Dendritic cell treated with granulocyte-macrophage colony-stimulating factor and Interleukin-4, amounts not matched to agents 40 ng/mL and 50 ng/mL, for 4 days (primary cell): ENCODE measurements at regions of chr6 and their contacts with region 1.

Region 1: DNA sequence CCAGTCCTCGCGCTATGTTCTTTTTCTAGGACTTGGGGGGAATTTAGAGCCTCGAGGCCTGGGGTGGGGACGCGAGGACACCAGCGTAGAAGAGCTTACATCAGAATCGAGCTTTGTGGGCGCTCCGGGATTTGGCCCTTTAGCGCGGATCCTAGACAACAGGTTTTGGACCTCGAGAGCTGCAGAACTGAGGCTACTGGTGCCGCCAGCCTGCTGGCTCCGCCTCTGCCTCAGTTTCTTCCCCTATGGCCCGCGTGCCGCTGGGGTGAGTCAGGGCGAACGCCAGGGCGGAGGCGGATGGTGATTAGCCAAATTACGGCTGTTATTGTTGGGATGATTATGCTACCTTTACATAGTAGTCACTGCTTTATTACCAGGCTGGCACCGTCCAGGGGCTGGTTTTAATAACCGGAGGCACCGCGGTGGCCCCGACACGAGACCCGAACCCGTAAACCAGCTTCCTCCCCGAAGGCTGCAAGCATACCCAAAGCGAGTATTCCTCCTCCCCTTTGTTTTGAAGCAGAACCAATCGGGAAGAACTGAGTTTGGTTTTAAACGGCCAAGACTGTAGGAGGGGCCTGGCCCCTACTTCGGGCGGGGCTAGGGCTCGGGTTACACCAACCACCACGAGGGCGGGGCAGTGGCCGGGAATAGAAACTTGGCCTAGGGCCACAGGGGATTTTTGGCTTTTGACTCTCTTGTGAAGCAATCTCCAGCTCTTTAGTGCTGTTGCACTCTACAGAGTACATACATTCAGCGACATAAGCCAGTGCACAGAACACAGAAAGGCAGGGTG is 639 bp upstream of the GTPBP2 start:
- H3K4me3 Mint-ChIP-seq: peak overlapping the region; percentile 99
- H3K27ac Mint-ChIP-seq: peak overlapping the region; percentile 97
- H3K4me1 Mint-ChIP-seq: peaks cover 61% of the 10 kb centered on the region
- H3K27me3 Mint-ChIP-seq: no peaks in the 10 kb centered on the region

Region 2: GRCh38 chr6:43089874-43090558 is 539.7 kb before region 1 on chr6:
- intact Hi-C with region 1: no loop called
- H3K4me3 Mint-ChIP-seq: no peak overlapping the region
- H3K27ac Mint-ChIP-seq: no peak overlapping the region
- H3K4me1 Mint-ChIP-seq: peaks cover 6% of the 10 kb centered on the region
- H3K27me3 Mint-ChIP-seq: no peaks in the 10 kb centered on the region

Region 3: GRCh38 chr6:43575772-43576551 is 53.7 kb before region 1 on chr6 and contains the starts of genes POLH and XPO5:
- intact Hi-C with region 1: loop called (anchors 5 kb)
- H3K4me3 Mint-ChIP-seq: peak within 1 kb of the TSS; percentile 100
- H3K27ac Mint-ChIP-seq: peak within 1 kb of the TSS; percentile 88
- H3K4me1 Mint-ChIP-seq: peaks cover 38% of the 10 kb centered on the region
- H3K27me3 Mint-ChIP-seq: no peaks in the 10 kb centered on the region

Region 4: GRCh38 chr6:43856005-43856765 is 226.5 kb after region 1 on chr6:
- intact Hi-C with region 1: no loop called
- H3K4me3 Mint-ChIP-seq: no peak overlapping the region
- H3K27ac Mint-ChIP-seq: no peak overlapping the region
- H3K4me1 Mint-ChIP-seq: peaks cover 13% of the 10 kb centered on the region
- H3K27me3 Mint-ChIP-seq: peaks cover 26% of the 10 kb centered on the region

Region 5: GRCh38 chr6:44086931-44087574 is 457.4 kb after region 1 on chr6:
- intact Hi-C with region 1: no loop called
- H3K4me3 Mint-ChIP-seq: no peak overlapping the region
- H3K27ac Mint-ChIP-seq: no peak overlapping the region
- H3K4me1 Mint-ChIP-seq: no peaks in the 10 kb centered on the region
- H3K27me3 Mint-ChIP-seq: no peaks in the 10 kb centered on the region